Left ventricle myocardium superior (tissue), 1 donor: ENCODE measurements at regions of chr18 and their contacts with region 1.

Region 1: DNA sequence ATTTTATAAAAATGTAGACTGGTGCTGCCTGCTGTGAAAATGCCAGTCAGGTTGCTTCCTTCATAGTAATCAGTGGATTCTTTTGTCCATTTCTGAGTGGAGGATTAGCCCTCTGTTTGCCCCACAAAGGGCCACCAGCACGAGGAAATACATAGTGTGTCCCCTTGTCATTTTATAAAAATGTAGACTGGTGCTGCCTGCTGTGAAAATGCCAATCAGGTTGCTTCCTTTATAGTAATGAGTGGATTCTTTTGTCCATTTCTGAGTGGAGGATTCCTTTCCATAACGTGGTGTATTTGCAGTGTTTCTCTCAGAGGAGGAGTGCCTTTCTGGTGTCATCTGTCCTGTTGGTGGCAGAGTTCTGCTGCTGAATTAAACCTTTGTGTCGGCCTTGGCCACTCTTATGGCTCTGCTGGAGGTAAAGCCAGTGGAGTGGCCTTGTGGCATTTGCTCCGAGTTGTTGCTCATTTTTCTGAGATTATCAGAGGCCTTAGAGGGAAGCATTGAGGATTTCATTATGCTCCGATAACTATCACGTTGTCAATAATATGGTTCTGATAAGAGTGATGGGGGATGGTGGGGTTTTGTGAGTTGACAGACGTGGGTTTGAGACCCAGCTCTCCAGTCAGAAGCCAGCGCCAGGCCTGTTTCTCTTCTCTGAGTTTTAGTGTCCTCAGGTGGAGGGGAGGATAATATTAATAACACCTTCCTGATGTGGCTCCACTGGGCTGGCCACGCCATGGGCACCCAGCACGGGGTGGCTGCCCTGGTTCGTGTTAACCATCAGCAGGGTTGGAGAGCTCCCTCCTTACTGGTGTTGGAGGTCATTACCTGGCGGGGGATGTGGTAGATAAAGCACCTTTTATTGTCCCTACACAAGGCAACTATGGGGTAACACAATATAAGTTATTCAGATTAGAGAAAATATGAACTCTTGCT is 96.6 kb downstream of the NEDD4L start:
- DNase-seq: no peak
- ATAC-seq: peak; percentile 80

Region 2: DNA sequence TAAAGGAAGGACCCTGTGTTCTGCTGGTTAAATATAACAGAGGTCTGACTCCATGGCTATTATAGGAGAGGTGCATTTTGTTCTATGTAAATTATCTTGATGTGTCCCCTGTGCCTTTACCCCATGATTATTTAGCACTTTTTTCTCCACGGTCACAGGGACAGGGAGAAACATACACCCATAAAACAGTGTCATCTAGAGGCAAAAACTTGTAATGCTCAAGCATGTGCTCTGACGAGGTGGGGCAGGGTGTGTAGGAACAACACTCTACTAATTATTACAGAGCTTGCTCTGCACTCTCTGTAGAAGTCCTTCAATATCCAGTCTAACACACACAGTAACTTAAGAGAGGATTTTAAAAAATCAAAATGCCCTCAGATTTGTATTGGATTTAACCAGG is 91.3 kb after region 1 on chr18:
- intact Hi-C with region 1: loop called (anchors 5 kb)
- DNase-seq: no peak
- ATAC-seq: peak; percentile 85